A549 (cell line): ENCODE measurements at regions of chr11 and their contacts with region 1.

Region 1: GRCh38 chr11:75142714-75143419 is 8.0 kb upstream of the SLCO2B1 start:
- DNase-seq: peak; percentile 83 to 93
- ATAC-seq: peak; percentile 82 to 87
- H3K4me3 ChIP-seq: no peak overlapping the region
- H3K27ac ChIP-seq: peak overlapping the region; percentile 63 to 77
- H3K4me1 ChIP-seq: peaks cover 11% of the 10 kb centered on the region
- CTCF ChIP-seq: no peak
- EP300 ChIP-seq: no peak
- POLR2A ChIP-seq: 0 out of 2 replicates have a peak, but pooled peaks have one; percentile 8
- RAD21 ChIP-seq: no peak

Region 2: GRCh38 chr11:74826901-74827300 is 316.0 kb before region 1 on chr11:
- CTCF ChIA-PET with region 1: no interaction called
- POLR2A ChIA-PET with region 1: no interaction called
- DNase-seq: peak in 1 of 2 experiments; percentile 26
- ATAC-seq: no peak
- H3K4me3 ChIP-seq: no peak overlapping the region
- H3K27ac ChIP-seq: no peak overlapping the region
- H3K4me1 ChIP-seq: no peaks in the 10 kb centered on the region
- CTCF ChIP-seq: no peak
- EP300 ChIP-seq: no peak
- POLR2A ChIP-seq: no peak
- RAD21 ChIP-seq: no peak

Region 3: DNA sequence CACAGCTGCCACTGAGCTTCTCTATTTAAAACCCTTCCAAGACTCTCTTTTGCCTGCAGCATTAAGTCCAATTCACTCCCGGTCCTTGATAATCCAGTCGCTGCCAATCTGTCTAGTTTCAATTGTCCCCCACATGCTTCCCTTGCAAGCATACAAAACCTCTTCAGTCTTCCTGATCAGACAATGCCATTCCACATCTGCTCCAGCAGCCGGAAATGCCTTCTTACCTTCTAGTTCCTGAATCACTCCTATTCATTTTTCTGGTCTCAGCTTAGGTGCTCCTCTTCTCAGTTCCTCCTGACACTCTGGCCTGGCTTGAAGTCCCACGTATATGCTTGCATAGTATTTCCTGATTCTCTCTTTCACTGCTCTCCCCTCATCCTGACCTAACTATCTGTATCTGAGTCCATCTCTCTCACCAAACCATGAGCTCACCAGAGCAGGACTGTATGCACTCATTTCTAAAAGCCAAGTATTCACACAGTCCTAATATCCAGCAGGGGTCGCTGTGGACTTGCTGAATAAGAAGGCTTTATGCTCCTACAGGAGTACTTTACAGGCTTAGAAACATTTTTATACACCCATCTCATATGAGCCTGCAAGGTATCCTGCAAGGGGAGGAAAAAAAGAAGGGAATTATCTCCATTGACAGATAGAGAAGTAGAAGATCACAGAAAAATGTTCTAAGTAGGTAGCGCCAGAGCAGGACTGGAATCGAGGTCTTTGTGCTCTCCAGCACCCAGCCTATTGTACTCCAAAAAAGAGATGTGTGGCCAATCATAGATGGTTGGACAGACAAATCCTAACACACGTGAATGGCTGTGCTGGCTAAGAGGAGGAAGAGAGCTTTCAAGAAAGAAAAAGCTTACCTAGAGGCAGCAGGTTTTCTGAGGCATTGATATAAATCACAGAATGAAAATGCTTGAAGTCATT is 213.2 kb before region 1 on chr11:
- CTCF ChIA-PET with region 1: interaction called, 10 read pairs
- POLR2A ChIA-PET with region 1: no interaction called
- DNase-seq: peak; percentile 60 to 91
- ATAC-seq: peak; percentile 97 to 99
- H3K4me3 ChIP-seq: no peak overlapping the region
- H3K27ac ChIP-seq: no peak overlapping the region
- H3K4me1 ChIP-seq: peaks cover 9% of the 10 kb centered on the region; the same call in 2 of the 3 replicates
- CTCF ChIP-seq: peak; percentile 92
- EP300 ChIP-seq: no peak
- POLR2A ChIP-seq: no peak
- RAD21 ChIP-seq: peak; percentile 81 to 90

Region 4: GRCh38 chr11:75103380-75104026 is 39.4 kb before region 1 on chr11:
- CTCF ChIA-PET with region 1: interaction called, 12 read pairs
- POLR2A ChIA-PET with region 1: no interaction called
- DNase-seq: no peak
- ATAC-seq: no peak; a peak in 1 of 6 replicates
- H3K4me3 ChIP-seq: no peak overlapping the region
- H3K27ac ChIP-seq: peak overlapping the region in 1 of 2 experiments; percentile 53; a peak in 3 of 6 replicates
- H3K4me1 ChIP-seq: peaks cover 33% of the 10 kb centered on the region
- CTCF ChIP-seq: no peak
- EP300 ChIP-seq: no peak
- POLR2A ChIP-seq: no peak
- RAD21 ChIP-seq: no peak

Region 5: GRCh38 chr11:75174781-75175370 is 32.0 kb after region 1 on chr11:
- CTCF ChIA-PET with region 1: interaction called, 12 read pairs
- POLR2A ChIA-PET with region 1: no interaction called
- DNase-seq: no peak
- ATAC-seq: peak in 1 of 2 experiments; percentile 53; a peak in 1 of 6 replicates
- H3K4me3 ChIP-seq: no peak overlapping the region
- H3K27ac ChIP-seq: no peak overlapping the region
- H3K4me1 ChIP-seq: no peaks in the 10 kb centered on the region
- CTCF ChIP-seq: no peak
- EP300 ChIP-seq: no peak
- POLR2A ChIP-seq: no peak
- RAD21 ChIP-seq: no peak

Region 6: DNA sequence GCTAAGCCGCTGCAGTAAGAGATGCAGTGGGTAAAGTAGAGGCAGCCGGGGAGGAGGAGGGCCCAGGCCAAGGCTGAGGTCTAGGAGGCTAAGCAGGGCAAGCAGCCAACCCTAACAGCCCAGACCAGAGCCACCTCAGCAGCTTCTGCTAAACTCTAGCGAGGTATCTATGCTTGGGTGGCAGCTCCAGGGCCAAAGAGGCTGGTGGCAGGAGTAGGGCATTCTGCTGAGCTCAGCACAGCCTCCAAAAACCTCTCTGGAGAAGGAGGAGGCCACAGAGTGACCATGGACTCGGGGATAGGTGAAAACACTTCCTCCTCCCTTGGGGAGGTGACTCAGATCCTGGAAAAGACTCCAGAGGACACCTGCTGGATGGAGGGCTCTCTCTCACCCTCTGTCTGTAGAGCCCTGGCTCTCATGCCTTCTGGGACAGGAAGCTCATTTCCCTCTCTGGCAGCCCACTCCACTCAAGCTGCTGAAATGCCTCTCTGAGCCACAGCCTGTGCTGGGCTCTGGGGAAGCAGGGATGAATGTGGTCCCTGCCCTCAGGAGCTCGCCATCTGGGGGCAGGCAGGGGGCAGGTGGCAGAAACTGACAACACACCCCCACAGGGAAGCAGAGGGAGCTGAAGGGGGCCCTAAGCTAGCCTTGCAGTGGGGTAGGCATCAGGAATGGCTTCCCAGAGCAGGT is 81.2 kb after region 1 on chr11:
- CTCF ChIA-PET with region 1: interaction called, 10 read pairs
- POLR2A ChIA-PET with region 1: no interaction called
- DNase-seq: peak; percentile 21 to 29
- ATAC-seq: peak; percentile 92 to 95
- H3K4me3 ChIP-seq: no peak overlapping the region
- H3K27ac ChIP-seq: no peak overlapping the region
- H3K4me1 ChIP-seq: no peaks in the 10 kb centered on the region
- CTCF ChIP-seq: no peak
- EP300 ChIP-seq: no peak
- POLR2A ChIP-seq: no peak
- RAD21 ChIP-seq: no peak